ENCODE measurements at regions of chr2 and their contacts with region 1.

Region 1: DNA sequence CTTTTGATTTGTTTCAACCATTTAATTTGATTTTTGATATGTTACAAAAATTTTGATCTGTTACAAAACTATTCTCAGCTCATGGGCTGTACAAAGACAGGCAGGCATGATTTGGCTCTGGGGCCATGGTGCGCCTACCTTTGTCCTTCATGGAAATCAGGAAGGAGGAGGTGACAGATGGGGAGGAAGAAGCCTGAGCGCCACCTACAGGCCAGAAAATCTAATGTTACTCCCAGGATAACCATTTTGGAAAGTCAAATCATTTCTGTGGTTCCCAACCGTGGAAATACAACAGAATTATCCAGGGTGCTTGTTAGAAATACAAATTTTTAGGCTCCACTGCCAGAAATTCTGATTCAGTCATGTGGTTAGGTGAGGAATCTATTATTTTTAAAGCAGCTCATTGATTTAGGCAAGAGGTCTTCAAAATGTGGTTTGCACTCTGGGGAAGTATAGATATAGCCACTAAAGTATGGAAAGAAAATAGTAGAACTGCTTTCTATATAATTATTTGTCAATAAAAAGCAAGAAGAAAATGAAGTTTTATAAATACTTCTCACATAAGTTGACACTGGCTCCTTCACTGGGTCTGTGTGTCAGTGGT is 93.9 kb downstream of the EVA1A start:
- DNase-seq: peak; percentile 43
- H3K4me3 ChIP-seq: no peak overlapping the region
- H3K27ac ChIP-seq: no peak overlapping the region
- H3K4me1 ChIP-seq: no peaks in the 10 kb centered on the region
- CTCF ChIP-seq: peak; percentile 90

Region 2: GRCh38 chr2:75311993-75312392 is 154.8 kb before region 1 on chr2:
- CTCF ChIA-PET with region 1: no interaction called
- POLR2A ChIA-PET with region 1: no interaction called
- intact Hi-C with region 1: loop called (anchors 1 kb)
- DNase-seq: peak; percentile 90
- H3K4me3 ChIP-seq: peak overlapping the region; percentile 0
- H3K27ac ChIP-seq: peak overlapping the region; percentile 27
- H3K4me1 ChIP-seq: peaks cover 25% of the 10 kb centered on the region
- CTCF ChIP-seq: peak; percentile 77

Region 3: GRCh38 chr2:75608684-75609333 is 142.0 kb after region 1 on chr2:
- CTCF ChIA-PET with region 1: no interaction called
- POLR2A ChIA-PET with region 1: no interaction called
- intact Hi-C with region 1: loop called (anchors 10 kb)
- DNase-seq: peak; percentile 20
- H3K4me3 ChIP-seq: no peak overlapping the region
- H3K27ac ChIP-seq: no peak overlapping the region
- H3K4me1 ChIP-seq: no peaks in the 10 kb centered on the region
- CTCF ChIP-seq: peak; percentile 91